WTC11 (cell line): ENCODE measurements at regions of chr20 and their contacts with region 1.

Region 1: DNA sequence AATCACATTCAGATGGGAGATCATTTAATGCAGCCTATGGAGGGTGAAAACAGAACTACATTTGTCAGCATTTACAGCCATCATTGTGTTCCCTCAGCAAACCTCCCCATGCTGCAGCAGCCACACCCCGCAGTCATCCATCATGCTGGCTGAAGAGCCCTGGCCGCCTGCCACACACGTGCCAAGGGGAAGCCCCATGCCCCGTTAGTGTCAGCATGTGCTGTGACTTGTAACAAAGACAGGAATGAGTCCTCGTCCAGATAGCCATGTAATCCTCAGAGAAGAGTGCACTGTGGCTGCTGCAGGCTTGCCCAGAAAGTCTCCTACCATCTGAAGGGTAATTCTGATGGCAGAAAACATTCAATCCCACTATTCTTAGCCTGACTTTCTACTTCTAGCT is 1097.8 kb downstream of the KIF16B start:
- DNase-seq: no peak
- ATAC-seq: no peak
- H3K4me3 Mint-ChIP-seq: no peak overlapping the region
- H3K27ac Mint-ChIP-seq: no peak overlapping the region
- H3K4me1 Mint-ChIP-seq: 0 out of 2 replicates have a peak, but pooled peaks cover 2% of the 10 kb centered on the region
- H3K27me3 Mint-ChIP-seq: no peaks in the 10 kb centered on the region
- CTCF ChIP-seq: no peak

Region 2: DNA sequence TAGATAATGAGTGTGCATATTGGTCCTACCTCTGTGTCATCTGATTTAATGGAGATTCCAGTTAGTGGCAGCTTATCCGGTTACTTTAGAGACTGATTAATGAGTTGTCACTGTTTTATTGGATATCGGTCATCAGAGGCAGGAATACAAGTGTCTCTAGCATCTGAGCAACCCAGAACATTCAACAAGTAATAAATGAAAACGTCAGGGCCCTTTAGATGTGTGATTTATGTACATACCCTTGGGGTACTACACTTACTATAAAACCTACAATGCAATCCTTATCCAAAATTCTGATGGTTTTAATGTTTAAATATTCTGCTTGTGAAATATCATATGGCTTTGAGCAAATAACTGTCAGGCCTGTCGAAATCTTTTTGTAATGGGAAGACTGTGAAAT is 20.2 kb before region 1 on chr20:
- CTCF ChIA-PET with region 1: no interaction called
- POLR2A ChIA-PET with region 1: no interaction called
- DNase-seq: no peak
- ATAC-seq: no peak
- H3K4me3 Mint-ChIP-seq: no peak overlapping the region
- H3K27ac Mint-ChIP-seq: no peak overlapping the region
- H3K4me1 Mint-ChIP-seq: 0 out of 2 replicates have a peak, but pooled peaks cover 3% of the 10 kb centered on the region
- H3K27me3 Mint-ChIP-seq: no peaks in the 10 kb centered on the region
- CTCF ChIP-seq: no peak

Region 3: GRCh38 chr20:16678779-16679178 is 1203.3 kb after region 1 on chr20:
- CTCF ChIA-PET with region 1: no interaction called
- POLR2A ChIA-PET with region 1: interaction called, 10 read pairs
- DNase-seq: no peak
- ATAC-seq: no peak
- H3K4me3 Mint-ChIP-seq: no peak overlapping the region
- H3K27ac Mint-ChIP-seq: no peak overlapping the region
- H3K4me1 Mint-ChIP-seq: no peaks in the 10 kb centered on the region; the same call in 1 of the 2 replicates
- H3K27me3 Mint-ChIP-seq: no peaks in the 10 kb centered on the region
- CTCF ChIP-seq: no peak